Endothelial cell of umbilical vein (primary cell): ENCODE measurements at regions of chr17 and their contacts with region 1.

Region 1: GRCh38 chr17:78186692-78187595 is at the starts of genes AFMID and TK1:
- DNase-seq: peak; percentile 98
- H3K4me3 ChIP-seq: peak within 1 kb of the TSS; percentile 58 to 69 (median 68)
- H3K27ac ChIP-seq: peak within 1 kb of the TSS; percentile 50
- H3K4me1 ChIP-seq: peaks cover 11% of the 10 kb centered on the region
- H3K27me3 ChIP-seq: no peaks in the 10 kb centered on the region
- CTCF ChIP-seq: peak; percentile 77 to 90
- POLR2A ChIP-seq: peak; percentile 91
- total RNA-seq, gene AFMID: 33.5 and 46.3 TPM in 2 replicates
- total RNA-seq, gene TK1: 110 and 111 TPM in 2 replicates

Region 2: GRCh38 chr17:77834170-77835115 is 352.5 kb before region 1 on chr17:
- CTCF ChIA-PET with region 1: no interaction called
- POLR2A ChIA-PET with region 1: no interaction called
- dilution Hi-C with region 1: no loop called
- intact Hi-C with region 1: loop called (anchors 5 kb)
- DNase-seq: peak; percentile 75
- H3K4me3 ChIP-seq: no peak overlapping the region
- H3K27ac ChIP-seq: no peak overlapping the region
- H3K4me1 ChIP-seq: peaks cover 31% of the 10 kb centered on the region
- H3K27me3 ChIP-seq: no peaks in the 10 kb centered on the region
- CTCF ChIP-seq: no peak
- POLR2A ChIP-seq: no peak

Region 3: DNA sequence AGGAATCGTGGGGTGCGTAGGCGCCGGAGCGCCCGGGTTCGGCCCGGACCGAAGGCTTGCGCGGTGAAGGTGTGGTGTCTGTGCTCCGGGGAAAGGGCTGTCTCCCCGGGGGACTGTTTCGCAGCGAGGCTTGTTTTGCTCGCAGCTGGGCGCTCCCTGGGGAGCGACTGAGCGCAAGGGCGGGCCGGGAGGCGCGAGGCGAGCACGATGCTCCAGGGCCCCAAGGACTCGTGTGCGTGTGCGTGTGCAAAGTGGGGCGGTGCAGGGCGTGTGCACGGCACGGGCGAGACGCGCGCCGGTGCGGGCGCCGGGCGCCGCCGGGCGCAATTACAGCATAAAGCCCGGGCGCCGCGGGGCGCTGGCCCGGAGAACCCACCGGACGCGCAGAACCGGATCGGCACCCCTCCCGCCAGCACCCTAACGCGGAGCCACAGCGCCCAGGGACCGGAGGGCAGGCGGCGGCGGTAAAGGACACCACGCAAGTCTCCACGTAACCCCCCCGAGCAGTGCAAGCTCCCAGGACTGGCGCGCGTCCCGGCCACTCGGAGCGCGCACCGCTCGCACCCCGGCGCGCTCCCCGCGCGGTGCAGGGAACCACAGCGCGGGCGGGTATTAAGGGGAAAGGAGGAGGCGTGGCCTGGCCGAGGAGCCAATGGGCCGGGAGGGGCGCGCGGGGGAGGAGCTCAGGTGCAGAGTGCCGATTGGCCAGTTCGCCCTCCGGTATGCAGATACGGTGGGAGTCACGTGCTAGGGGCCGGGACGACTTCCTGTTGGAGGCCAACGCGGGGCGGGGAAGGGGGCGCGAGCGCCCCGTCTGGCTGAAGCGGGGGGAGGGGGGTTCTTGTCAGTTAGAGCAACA is 228.9 kb before region 1 on chr17 and contains the start of gene TNRC6C:
- CTCF ChIA-PET with region 1: no interaction called
- POLR2A ChIA-PET with region 1: no interaction called
- dilution Hi-C with region 1: no loop called
- intact Hi-C with region 1: loop called (anchors 5 kb)
- DNase-seq: peak; percentile 98
- H3K4me3 ChIP-seq: peak within 1 kb of the TSS; percentile 65 to 81 (median 67)
- H3K27ac ChIP-seq: peak within 1 kb of the TSS; percentile 21
- H3K4me1 ChIP-seq: peaks cover 20% of the 10 kb centered on the region
- H3K27me3 ChIP-seq: peaks cover 26 to 29% of the 10 kb centered on the region in 2 experiments
- CTCF ChIP-seq: peak in 1 of 2 donors; percentile 33
- POLR2A ChIP-seq: peak; percentile 99
- total RNA-seq, gene TNRC6C: 17.5 and 20.4 TPM in 2 replicates

Region 4: DNA sequence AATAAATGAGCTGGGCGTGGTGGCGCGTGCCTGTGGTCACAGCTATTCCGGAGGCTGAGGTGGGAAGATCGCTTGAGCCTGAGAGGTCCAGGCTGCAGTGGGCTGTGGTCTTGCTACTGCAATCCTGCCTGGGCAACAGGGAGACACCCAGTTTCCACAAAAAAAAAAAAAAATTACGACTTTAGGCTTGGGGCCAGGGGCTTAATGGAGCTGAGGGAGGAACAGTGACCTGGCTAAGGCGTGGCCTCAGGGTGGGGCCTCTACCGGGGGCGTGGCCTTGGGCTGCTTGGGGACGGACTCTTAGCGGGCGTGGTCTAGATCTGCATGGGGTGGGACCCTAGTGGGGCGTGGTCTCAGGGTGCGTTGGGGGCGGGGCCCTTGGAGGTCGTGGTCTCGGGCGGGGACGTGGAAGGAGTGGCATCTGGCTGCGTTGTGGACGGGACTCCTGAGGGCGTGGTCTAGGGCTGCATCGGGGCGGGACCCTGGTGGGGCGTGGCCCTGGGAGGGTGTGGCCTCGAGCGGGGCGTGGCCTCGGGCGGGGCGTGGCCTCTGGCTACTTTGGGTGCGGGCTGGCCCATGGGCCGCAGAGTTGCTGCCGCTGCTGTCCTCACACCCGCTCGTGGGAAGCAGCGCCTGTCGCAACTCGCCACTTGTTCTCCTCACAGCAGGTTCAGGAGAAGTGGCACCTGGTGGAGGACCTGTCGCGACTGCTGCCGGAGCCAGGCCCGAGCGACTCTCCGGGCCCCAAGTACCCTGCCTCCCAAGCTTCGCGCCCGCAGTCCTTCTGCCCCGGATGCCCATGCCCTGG is 46.6 kb before region 1 on chr17:
- CTCF ChIA-PET with region 1: interaction called, 3 read pairs
- POLR2A ChIA-PET with region 1: interaction called, 3 read pairs
- dilution Hi-C with region 1: no loop called
- intact Hi-C with region 1: loop called (anchors 1 kb)
- DNase-seq: peak; percentile 84
- H3K4me3 ChIP-seq: peak overlapping the region in 1 of 3 experiments; percentile 1
- H3K27ac ChIP-seq: no peak overlapping the region
- H3K4me1 ChIP-seq: peaks cover 22% of the 10 kb centered on the region
- H3K27me3 ChIP-seq: no peaks in the 10 kb centered on the region
- CTCF ChIP-seq: no peak
- POLR2A ChIP-seq: peak; percentile 51

Region 5: GRCh38 chr17:78176548-78177025 is 10.4 kb before region 1 on chr17:
- CTCF ChIA-PET with region 1: interaction called, 24 read pairs
- POLR2A ChIA-PET with region 1: interaction called, 3 read pairs
- dilution Hi-C with region 1: no loop called
- intact Hi-C with region 1: no loop called
- DNase-seq: peak; percentile 52
- H3K4me3 ChIP-seq: no peak overlapping the region
- H3K27ac ChIP-seq: no peak overlapping the region
- H3K4me1 ChIP-seq: peaks cover 8% of the 10 kb centered on the region
- H3K27me3 ChIP-seq: no peaks in the 10 kb centered on the region
- CTCF ChIP-seq: peak; percentile 96 to 98
- POLR2A ChIP-seq: no peak

Region 6: DNA sequence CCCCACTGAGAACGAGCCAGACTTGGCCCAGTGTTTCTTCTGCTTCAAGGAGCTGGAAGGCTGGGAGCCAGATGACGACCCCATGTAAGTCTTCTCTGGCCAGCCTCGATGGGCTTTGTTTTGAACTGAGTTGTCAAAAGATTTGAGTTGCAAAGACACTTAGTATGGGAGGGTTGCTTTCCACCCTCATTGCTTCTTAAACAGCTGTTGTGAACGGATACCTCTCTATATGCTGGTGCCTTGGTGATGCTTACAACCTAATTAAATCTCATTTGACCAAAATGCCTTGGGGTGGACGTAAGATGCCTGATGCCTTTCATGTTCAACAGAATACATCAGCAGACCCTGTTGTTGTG is 27.7 kb after region 1 on chr17:
- CTCF ChIA-PET with region 1: no interaction called
- POLR2A ChIA-PET with region 1: interaction called, 4 read pairs
- dilution Hi-C with region 1: no loop called
- intact Hi-C with region 1: loop called (anchors 1 kb)
- DNase-seq: no peak
- H3K4me3 ChIP-seq: peak overlapping the region; percentile 55 to 93 (median 80)
- H3K27ac ChIP-seq: peak overlapping the region; percentile 33
- H3K4me1 ChIP-seq: peaks cover 15% of the 10 kb centered on the region
- H3K27me3 ChIP-seq: no peaks in the 10 kb centered on the region
- CTCF ChIP-seq: no peak
- POLR2A ChIP-seq: no peak